ENCODE measurements at regions of chr1 and their contacts with region 1.

Region 1: GRCh38 chr1:12124693-12125421 is 41.9 kb upstream of the TNFRSF1B start:
- DNase-seq: no peak
- ATAC-seq: peak; percentile 67
- H3K4me3 ChIP-seq: no peak overlapping the region
- H3K27ac ChIP-seq: no peak overlapping the region
- H3K4me1 ChIP-seq: no peaks in the 10 kb centered on the region
- H3K27me3 ChIP-seq: no peaks in the 10 kb centered on the region
- CTCF ChIP-seq: peak; percentile 89 to 95 (median 89)
- EP300 ChIP-seq: no peak
- POLR2A ChIP-seq: no peak
- RAD21 ChIP-seq: peak; percentile 94

Region 2: DNA sequence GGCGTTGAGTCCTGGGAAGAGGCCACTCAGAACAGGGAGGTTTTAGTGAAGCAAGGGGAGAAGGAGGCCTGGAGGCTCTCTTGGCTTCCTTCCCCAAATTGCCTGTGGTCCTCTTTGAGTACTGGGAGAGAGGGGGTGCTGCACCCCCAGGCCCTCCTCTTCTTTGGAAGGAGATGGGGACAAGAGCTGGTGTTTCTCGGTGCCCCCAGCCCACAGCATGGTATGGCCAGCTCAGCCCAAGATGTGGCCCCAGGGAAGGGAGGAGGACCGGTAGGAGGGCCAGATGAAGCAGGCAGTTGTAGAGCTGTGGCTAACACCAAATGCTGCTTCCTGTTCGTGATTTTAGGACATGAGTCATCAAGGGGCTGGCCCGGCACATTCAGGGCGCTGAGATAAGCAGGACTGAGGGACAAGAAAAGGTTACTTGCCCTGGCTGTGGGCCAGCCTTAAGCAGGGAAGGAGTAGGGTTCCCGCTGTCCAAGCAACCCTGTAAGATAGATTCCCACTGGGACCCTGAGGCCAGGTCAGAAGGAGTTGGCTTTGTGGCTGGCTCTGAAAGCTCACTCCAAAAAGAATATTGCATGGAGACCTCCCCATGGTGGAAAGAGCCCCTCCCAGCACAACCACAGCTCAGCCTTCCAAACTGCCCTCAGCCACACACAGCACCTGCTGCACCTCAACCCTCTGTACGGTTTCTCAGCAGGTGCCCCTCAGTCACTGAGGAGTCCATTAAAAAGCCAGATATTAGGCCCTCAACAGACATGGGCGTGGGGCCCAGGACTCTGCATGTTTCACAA is 37.0 kb after region 1 on chr1:
- CTCF ChIA-PET with region 1: interaction called, 29 read pairs
- POLR2A ChIA-PET with region 1: interaction called, 3 read pairs
- RAD21 ChIA-PET with region 1: interaction called, 9 read pairs
- SMC1A ChIA-PET with region 1: interaction called, 15 read pairs
- in situ Hi-C with region 1: no loop called
- intact Hi-C with region 1: no loop called
- DNase-seq: peak; percentile 88
- ATAC-seq: peak; percentile 87
- H3K4me3 ChIP-seq: no peak overlapping the region
- H3K27ac ChIP-seq: peak overlapping the region; percentile 89
- H3K4me1 ChIP-seq: peaks cover 79% of the 10 kb centered on the region
- H3K27me3 ChIP-seq: no peaks in the 10 kb centered on the region
- CTCF ChIP-seq: no peak
- EP300 ChIP-seq: peak; percentile 77 to 88; a peak in 3 of 4 replicates
- POLR2A ChIP-seq: peak; percentile 69
- RAD21 ChIP-seq: no peak

Region 3: GRCh38 chr1:12184008-12184681 is 59.3 kb after region 1 on chr1:
- CTCF ChIA-PET with region 1: interaction called, 28 read pairs
- POLR2A ChIA-PET with region 1: interaction called, 3 read pairs
- RAD21 ChIA-PET with region 1: interaction called, 21 read pairs
- SMC1A ChIA-PET with region 1: interaction called, 15 read pairs
- in situ Hi-C with region 1: no loop called
- intact Hi-C with region 1: no loop called
- DNase-seq: no peak
- ATAC-seq: peak; percentile 76
- H3K4me3 ChIP-seq: no peak overlapping the region; the same call in 1 of the 2 replicates
- H3K27ac ChIP-seq: peak overlapping the region; percentile 47
- H3K4me1 ChIP-seq: peaks cover 20% of the 10 kb centered on the region
- H3K27me3 ChIP-seq: no peaks in the 10 kb centered on the region
- CTCF ChIP-seq: 0 out of 6 replicates have a peak, but pooled peaks of 1 of the 3 experiments have one; percentile 11
- EP300 ChIP-seq: no peak
- POLR2A ChIP-seq: no peak
- RAD21 ChIP-seq: 0 out of 2 replicates have a peak, but pooled peaks have one; percentile 29

Region 4: GRCh38 chr1:12220890-12221289 is 96.0 kb after region 1 on chr1:
- CTCF ChIA-PET with region 1: interaction called, 17 read pairs
- POLR2A ChIA-PET with region 1: no interaction called
- RAD21 ChIA-PET with region 1: interaction called, 9 read pairs
- SMC1A ChIA-PET with region 1: interaction called, 10 read pairs
- in situ Hi-C with region 1: no loop called
- intact Hi-C with region 1: no loop called
- DNase-seq: no peak
- ATAC-seq: no peak
- H3K4me3 ChIP-seq: no peak overlapping the region
- H3K27ac ChIP-seq: no peak overlapping the region
- H3K4me1 ChIP-seq: no peaks in the 10 kb centered on the region
- H3K27me3 ChIP-seq: no peaks in the 10 kb centered on the region
- CTCF ChIP-seq: no peak
- EP300 ChIP-seq: no peak
- POLR2A ChIP-seq: no peak
- RAD21 ChIP-seq: no peak

Region 5: GRCh38 chr1:12269351-12269750 is 144.5 kb after region 1 on chr1:
- CTCF ChIA-PET with region 1: interaction called, 12 read pairs
- POLR2A ChIA-PET with region 1: no interaction called
- RAD21 ChIA-PET with region 1: interaction called, 8 read pairs
- SMC1A ChIA-PET with region 1: interaction called, 3 read pairs
- in situ Hi-C with region 1: no loop called
- intact Hi-C with region 1: no loop called
- DNase-seq: no peak
- ATAC-seq: no peak
- H3K4me3 ChIP-seq: no peak overlapping the region
- H3K27ac ChIP-seq: no peak overlapping the region
- H3K4me1 ChIP-seq: no peaks in the 10 kb centered on the region
- H3K27me3 ChIP-seq: no peaks in the 10 kb centered on the region
- CTCF ChIP-seq: no peak
- EP300 ChIP-seq: no peak
- POLR2A ChIP-seq: no peak
- RAD21 ChIP-seq: no peak

Measured in GM12878 (cell line).